ENCODE measurements at regions of chr22 and their contacts with region 1.

Region 1: DNA sequence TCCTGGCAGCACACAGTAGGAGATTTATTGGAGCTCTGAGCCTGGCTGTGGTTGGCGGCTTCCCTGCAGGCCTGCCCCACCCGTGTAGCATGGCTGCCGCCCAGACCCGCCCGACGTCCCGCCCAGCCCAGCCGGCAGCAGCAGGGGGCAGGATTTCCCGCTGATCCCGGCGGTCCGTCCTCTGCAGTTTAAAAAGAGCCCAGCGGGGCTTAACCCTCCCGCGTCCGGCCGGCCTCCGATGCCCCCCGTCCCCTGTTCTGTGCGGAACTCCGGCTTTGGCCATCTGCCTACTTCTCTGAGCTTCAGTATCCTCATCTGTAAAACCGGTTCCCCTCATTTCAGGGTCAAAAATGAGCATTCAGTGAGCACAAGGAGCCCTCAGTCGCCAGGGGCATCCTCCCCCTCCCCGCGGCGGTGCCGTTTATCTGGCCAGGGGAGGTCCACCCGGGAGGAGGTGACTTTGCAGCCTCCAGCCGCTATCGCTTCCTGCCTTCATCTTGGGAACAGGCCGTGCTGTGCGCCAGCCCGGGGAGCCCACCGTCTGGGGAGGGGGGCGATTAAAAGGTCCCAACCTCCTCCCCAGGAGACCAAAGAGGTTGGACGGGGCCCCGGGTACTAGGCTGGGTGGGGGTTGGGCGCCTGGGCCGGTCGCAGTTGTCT is at the start of gene GAS2L1:
- DNase-seq: no peak
- H3K4me3 ChIP-seq: peak within 1 kb of the TSS; percentile 62
- CTCF ChIP-seq: peak; percentile 89

Region 2: GRCh38 chr22:29344137-29344536 is 37.8 kb after region 1 on chr22:
- CTCF ChIA-PET with region 1: interaction called, 10 read pairs
- POLR2A ChIA-PET with region 1: no interaction called
- DNase-seq: peak; percentile 79
- H3K4me3 ChIP-seq: no peak overlapping the region
- CTCF ChIP-seq: no peak

Region 3: GRCh38 chr22:29820961-29821789 is 514.9 kb after region 1 on chr22:
- CTCF ChIA-PET with region 1: no interaction called
- POLR2A ChIA-PET with region 1: no interaction called
- DNase-seq: peak; percentile 78
- H3K4me3 ChIP-seq: no peak overlapping the region
- CTCF ChIP-seq: no peak